Tibial artery (tissue), 4 donors: ENCODE measurements at regions of chr3 and their contacts with region 1.

Region 1: GRCh38 chr3:190120269-190121060 is at the start of gene P3H2:
- DNase-seq: peak; percentile 78 to 94
- H3K4me3 ChIP-seq: peak within 1 kb of the TSS; percentile 67 to 80
- H3K27ac ChIP-seq: peak within 1 kb of the TSS; percentile 81 to 88
- H3K4me1 ChIP-seq: peaks cover 0 to 41% (median 17%) of the 10 kb centered on the region in 4 donors
- H3K27me3 ChIP-seq: no peaks in the 10 kb centered on the region
- CTCF ChIP-seq: peak; percentile 46 to 57

Region 2: GRCh38 chr3:189961525-189962161 is 158.8 kb before region 1 on chr3:
- intact Hi-C with region 1: loop called (anchors 10 kb)
- DNase-seq: peak; percentile 76 to 81
- H3K4me3 ChIP-seq: no peak overlapping the region
- H3K27ac ChIP-seq: peak overlapping the region in 1 of 2 donors; percentile 34
- H3K4me1 ChIP-seq: peaks cover 0 to 7% (median 2%) of the 10 kb centered on the region in 4 donors
- H3K27me3 ChIP-seq: no peaks in the 10 kb centered on the region
- CTCF ChIP-seq: peak; percentile 87

Region 3: GRCh38 chr3:190017521-190018288 is 102.8 kb before region 1 on chr3:
- intact Hi-C with region 1: loop called (anchors 5 kb)
- DNase-seq: no peak
- H3K4me3 ChIP-seq: no peak overlapping the region
- H3K27ac ChIP-seq: no peak overlapping the region
- H3K4me1 ChIP-seq: peaks cover 0 to 23% (median 4%) of the 10 kb centered on the region in 4 donors
- H3K27me3 ChIP-seq: no peaks in the 10 kb centered on the region
- CTCF ChIP-seq: peak; percentile 23 to 26

Region 4: GRCh38 chr3:190169877-190170276 is 49.4 kb after region 1 on chr3:
- intact Hi-C with region 1: no loop called
- DNase-seq: no peak
- H3K4me3 ChIP-seq: no peak overlapping the region
- H3K27ac ChIP-seq: no peak overlapping the region
- H3K4me1 ChIP-seq: peaks cover 0 to 9% (median 3%) of the 10 kb centered on the region in 4 donors
- H3K27me3 ChIP-seq: no peaks in the 10 kb centered on the region
- CTCF ChIP-seq: no peak